Kidney (tissue), 22 donors: ENCODE measurements at regions of chr19 and their contacts with region 1.

Region 1: GRCh38 chr19:5031231-5032100 is 62.6 kb downstream of the KDM4B start:
- DNase-seq: peak; percentile 85 to 93 (median 91)
- H3K4me3 ChIP-seq: no peak overlapping the region
- H3K27ac ChIP-seq: no peak overlapping the region
- H3K4me1 ChIP-seq: peaks cover 0 to 2% (median 0%) of the 10 kb centered on the region in 3 donors
- H3K27me3 ChIP-seq: no peaks in the 10 kb centered on the region
- CTCF ChIP-seq: peak; percentile 95

Region 2: GRCh38 chr19:4803736-4804695 is 227.4 kb before region 1 on chr19:
- intact Hi-C with region 1: loop called (anchors 10 kb)
- DNase-seq: peak; percentile 69 to 80 (median 76)
- H3K4me3 ChIP-seq: no peak overlapping the region
- H3K27ac ChIP-seq: no peak overlapping the region
- H3K4me1 ChIP-seq: no peaks in the 10 kb centered on the region
- H3K27me3 ChIP-seq: no peaks in the 10 kb centered on the region
- CTCF ChIP-seq: peak; percentile 61

Region 3: DNA sequence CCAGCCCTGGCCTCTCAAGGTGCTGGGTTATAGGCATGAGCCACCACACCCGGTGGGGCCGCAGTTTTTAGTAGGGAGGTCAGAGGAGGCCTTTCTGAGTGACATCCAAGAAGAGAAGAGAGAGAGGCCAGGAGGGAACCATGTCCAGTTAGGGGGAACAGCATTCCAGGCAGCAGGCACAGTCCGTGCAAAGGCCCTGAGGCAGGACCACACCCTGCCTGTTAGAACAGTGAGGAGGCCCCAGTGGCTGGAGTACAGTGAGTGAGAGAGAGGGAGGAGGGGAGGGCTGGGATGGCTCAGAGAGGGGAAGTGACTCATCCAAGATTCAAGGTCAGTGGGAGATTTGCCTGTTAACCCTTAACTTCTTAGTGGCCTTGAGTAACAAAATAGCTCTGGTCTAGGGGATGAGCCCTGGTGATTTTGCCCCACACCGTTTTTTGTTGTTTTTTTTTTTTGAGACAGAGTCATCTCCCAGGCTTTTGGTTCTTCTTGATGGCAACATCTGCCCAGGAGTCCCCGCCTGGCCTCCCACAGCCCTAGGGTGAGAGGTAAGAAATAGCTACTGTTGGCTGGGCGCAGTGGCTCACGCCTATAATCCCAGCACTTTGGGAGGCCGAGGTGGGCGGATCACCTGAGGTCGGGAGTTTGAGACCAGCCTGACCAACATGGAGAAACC is 161.3 kb before region 1 on chr19:
- intact Hi-C with region 1: loop called (anchors 5 kb)
- DNase-seq: no peak
- H3K4me3 ChIP-seq: no peak overlapping the region
- H3K27ac ChIP-seq: no peak overlapping the region
- H3K4me1 ChIP-seq: peaks cover 0 to 8% (median 8%) of the 10 kb centered on the region in 3 donors
- H3K27me3 ChIP-seq: no peaks in the 10 kb centered on the region
- CTCF ChIP-seq: no peak